Panc1 (cell line): ENCODE measurements at regions of chr20 and their contacts with region 1.

Region 1: GRCh38 chr20:33825340-33826269 is 14.5 kb downstream of the CHMP4B start:
- DNase-seq: no peak
- ATAC-seq: no peak; the same call in 1 of the 2 replicates
- H3K4me3 ChIP-seq: no peak overlapping the region
- H3K27ac ChIP-seq: no peak overlapping the region
- H3K4me1 ChIP-seq: 0 out of 2 replicates have a peak, but pooled peaks cover 2% of the 10 kb centered on the region
- H3K27me3 ChIP-seq: no peaks in the 10 kb centered on the region
- CTCF ChIP-seq: no peak

Region 2: GRCh38 chr20:33992923-33993575 is 167.4 kb after region 1 on chr20:
- CTCF ChIA-PET with region 1: interaction called, 10 read pairs
- POLR2A ChIA-PET with region 1: no interaction called
- in situ Hi-C with region 1: no loop called
- intact Hi-C with region 1: no loop called
- DNase-seq: peak; percentile 94
- ATAC-seq: peak; percentile 85
- H3K4me3 ChIP-seq: peak overlapping the region; percentile 88 to 99
- H3K27ac ChIP-seq: peak overlapping the region; percentile 99
- H3K4me1 ChIP-seq: peaks cover 18% of the 10 kb centered on the region
- H3K27me3 ChIP-seq: no peaks in the 10 kb centered on the region
- CTCF ChIP-seq: no peak